ENCODE measurements at regions of chr9 and their contacts with region 1.

Region 1: GRCh38 chr9:35603987-35604577 is 980 bp upstream of the TESK1 start:
- DNase-seq: peak; percentile 100
- ATAC-seq: peak; percentile 93
- H3K4me3 Mint-ChIP-seq: peak overlapping the region; percentile 83
- H3K27ac Mint-ChIP-seq: peak overlapping the region; percentile 96
- H3K4me1 Mint-ChIP-seq: peaks cover 23% of the 10 kb centered on the region
- H3K27me3 Mint-ChIP-seq: no peaks in the 10 kb centered on the region

Region 2: DNA sequence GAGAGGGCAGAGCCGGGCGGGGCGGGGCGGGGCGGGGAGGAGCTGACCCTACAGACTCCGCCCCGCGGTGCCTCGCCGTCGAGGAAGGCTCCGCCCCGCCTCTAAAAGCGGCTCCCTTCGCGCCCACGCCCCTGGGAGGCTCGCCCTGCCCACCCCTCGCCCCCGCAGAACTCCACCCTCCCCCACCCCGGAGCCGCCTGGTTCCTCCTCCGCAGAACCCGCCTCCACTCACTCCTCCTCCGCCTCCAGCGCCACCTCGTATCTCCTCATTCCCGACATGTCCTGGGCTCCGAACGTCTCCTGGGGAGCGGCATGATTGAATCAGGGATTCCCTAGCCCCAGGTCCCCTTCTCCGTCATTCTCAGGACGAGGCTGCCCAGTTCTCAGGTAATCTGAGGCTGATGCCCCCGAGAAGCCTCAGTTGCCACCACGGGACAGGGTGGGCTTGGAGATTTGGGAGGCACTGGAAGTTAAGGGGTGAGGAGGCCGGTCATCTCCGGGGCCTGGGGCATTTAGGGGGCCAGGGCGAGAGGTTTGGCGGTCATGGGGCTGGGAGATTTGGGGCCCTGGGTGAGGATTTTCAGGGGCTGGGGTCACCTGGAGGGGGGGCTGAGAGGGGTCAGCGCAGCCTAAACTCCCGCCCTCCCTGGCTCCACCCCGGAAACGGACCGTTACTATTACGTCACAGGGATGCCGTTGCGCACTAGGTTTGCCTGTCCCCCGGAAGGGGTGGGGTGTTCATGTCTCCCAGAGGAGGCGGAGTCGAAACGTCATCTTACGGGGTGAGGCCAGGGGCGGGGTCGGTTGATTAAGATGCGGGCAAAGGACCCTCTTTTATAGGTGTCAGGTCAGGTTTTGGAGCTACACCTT is 938.5 kb before region 1 on chr9:
- CTCF ChIA-PET with region 1: no interaction called
- POLR2A ChIA-PET with region 1: no interaction called
- intact Hi-C with region 1: loop called in 1 of 2 experiments (anchors 10 kb)
- DNase-seq: peak; percentile 93
- ATAC-seq: peak; percentile 75
- H3K4me3 Mint-ChIP-seq: peak overlapping the region; percentile 77
- H3K27ac Mint-ChIP-seq: peak overlapping the region; percentile 87
- H3K4me1 Mint-ChIP-seq: peaks cover 33% of the 10 kb centered on the region
- H3K27me3 Mint-ChIP-seq: no peaks in the 10 kb centered on the region

Region 3: DNA sequence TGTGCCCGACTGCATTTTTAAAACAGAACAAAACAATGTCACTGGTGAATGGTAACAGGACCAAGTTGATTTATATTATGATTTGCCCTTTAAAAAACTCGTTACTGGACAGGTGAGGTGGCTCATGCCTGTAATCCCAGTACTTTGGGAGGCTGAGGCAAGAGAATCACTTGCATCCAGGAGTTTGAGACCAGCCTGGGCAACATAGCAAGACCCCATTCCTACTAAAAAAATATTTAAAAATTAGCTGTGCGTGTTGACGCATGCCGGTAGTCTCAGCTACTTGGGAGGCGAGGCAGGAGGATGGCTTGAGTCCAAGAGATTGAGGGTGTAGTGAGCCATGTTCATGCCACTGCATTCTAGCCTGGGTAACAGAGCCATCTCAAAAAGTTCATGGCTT is 435.1 kb before region 1 on chr9:
- CTCF ChIA-PET with region 1: no interaction called
- POLR2A ChIA-PET with region 1: no interaction called
- intact Hi-C with region 1: no loop called
- DNase-seq: no peak
- ATAC-seq: no peak
- H3K4me3 Mint-ChIP-seq: no peak overlapping the region
- H3K27ac Mint-ChIP-seq: no peak overlapping the region
- H3K4me1 Mint-ChIP-seq: no peaks in the 10 kb centered on the region
- H3K27me3 Mint-ChIP-seq: no peaks in the 10 kb centered on the region

Region 4: DNA sequence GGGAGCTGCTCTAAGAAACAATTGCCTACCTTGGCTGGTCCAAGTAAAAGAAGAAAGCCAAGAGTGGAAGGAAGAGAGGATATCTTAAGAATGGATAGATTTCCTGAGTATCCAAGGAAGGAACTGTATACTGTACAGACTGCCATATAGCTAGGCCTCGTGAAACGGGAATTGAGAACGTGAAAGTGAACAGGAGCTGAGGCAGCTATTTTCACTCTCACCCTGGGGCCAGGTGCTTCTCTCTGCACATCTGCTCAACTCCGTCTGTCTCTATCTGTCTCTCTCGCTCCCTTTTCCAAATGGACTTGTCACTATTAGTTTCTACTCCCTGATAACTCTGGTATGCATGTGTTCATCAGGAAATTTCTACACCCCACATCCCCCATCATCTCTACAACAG is 34.9 kb before region 1 on chr9:
- CTCF ChIA-PET with region 1: interaction called, 6 read pairs
- POLR2A ChIA-PET with region 1: no interaction called
- intact Hi-C with region 1: loop called in 1 of 2 experiments (anchors 1 kb)
- DNase-seq: no peak
- ATAC-seq: no peak
- H3K4me3 Mint-ChIP-seq: peak overlapping the region; percentile 16
- H3K27ac Mint-ChIP-seq: peak overlapping the region; percentile 93
- H3K4me1 Mint-ChIP-seq: peaks cover 38% of the 10 kb centered on the region
- H3K27me3 Mint-ChIP-seq: no peaks in the 10 kb centered on the region

Region 5: GRCh38 chr9:35646533-35647265 is 42.6 kb after region 1 on chr9:
- CTCF ChIA-PET with region 1: interaction called, 15 read pairs
- POLR2A ChIA-PET with region 1: no interaction called
- intact Hi-C with region 1: loop called (anchors 1 kb)
- DNase-seq: peak; percentile 96
- ATAC-seq: peak; percentile 84
- H3K4me3 Mint-ChIP-seq: peak overlapping the region; percentile 91
- H3K27ac Mint-ChIP-seq: peak overlapping the region; percentile 97
- H3K4me1 Mint-ChIP-seq: peaks cover 51% of the 10 kb centered on the region
- H3K27me3 Mint-ChIP-seq: no peaks in the 10 kb centered on the region

Region 6: GRCh38 chr9:35756275-35757225 is 152.5 kb after region 1 on chr9:
- CTCF ChIA-PET with region 1: no interaction called
- POLR2A ChIA-PET with region 1: no interaction called
- intact Hi-C with region 1: loop called in 1 of 2 experiments (anchors 2 kb)
- DNase-seq: peak; percentile 92
- ATAC-seq: peak; percentile 92
- H3K4me3 Mint-ChIP-seq: peak overlapping the region; percentile 97
- H3K27ac Mint-ChIP-seq: peak overlapping the region; percentile 94
- H3K4me1 Mint-ChIP-seq: peaks cover 34% of the 10 kb centered on the region
- H3K27me3 Mint-ChIP-seq: no peaks in the 10 kb centered on the region

Region 7: DNA sequence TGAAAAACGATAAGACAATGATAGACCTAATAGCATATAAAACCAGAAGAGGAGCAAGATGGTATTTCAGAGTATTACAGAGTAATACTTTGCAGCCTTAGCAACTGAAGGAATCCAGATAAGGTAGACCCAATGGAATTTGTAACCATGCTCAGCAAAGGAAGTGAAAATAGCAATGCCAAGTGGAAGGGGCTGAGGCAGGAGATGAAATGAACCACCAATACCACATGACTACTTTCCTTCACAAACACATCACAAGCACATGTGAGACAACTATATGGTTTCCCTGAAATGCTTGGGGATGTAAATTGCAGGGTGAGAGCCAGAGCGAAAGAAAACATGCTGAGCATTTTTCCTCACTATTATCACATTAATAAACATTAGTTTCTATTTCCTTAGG is 888.8 kb after region 1 on chr9:
- CTCF ChIA-PET with region 1: no interaction called
- POLR2A ChIA-PET with region 1: no interaction called
- intact Hi-C with region 1: loop called in 1 of 2 experiments (anchors 5 kb)
- DNase-seq: peak; percentile 24
- ATAC-seq: peak; percentile 70
- H3K4me3 Mint-ChIP-seq: peak overlapping the region; percentile 61
- H3K27ac Mint-ChIP-seq: peak overlapping the region; percentile 88
- H3K4me1 Mint-ChIP-seq: peaks cover 66% of the 10 kb centered on the region
- H3K27me3 Mint-ChIP-seq: no peaks in the 10 kb centered on the region